GM12878 (cell line): ENCODE measurements at regions of chr5 and their contacts with region 1.

Region 1: GRCh38 chr5:35319333-35320002 is 89.2 kb upstream of the PRLR start:
- DNase-seq: peak; percentile 96
- ATAC-seq: peak; percentile 91
- H3K4me3 ChIP-seq: no peak overlapping the region
- H3K27ac ChIP-seq: peak overlapping the region; percentile 66
- H3K4me1 ChIP-seq: peaks cover 11% of the 10 kb centered on the region
- H3K27me3 ChIP-seq: no peaks in the 10 kb centered on the region
- CTCF ChIP-seq: no peak
- EP300 ChIP-seq: peak; percentile 92 to 96
- POLR2A ChIP-seq: no peak
- RAD21 ChIP-seq: no peak

Region 2: GRCh38 chr5:34838785-34839714 is 480.4 kb before region 1 on chr5 and contains the start of gene TTC23L:
- CTCF ChIA-PET with region 1: no interaction called
- POLR2A ChIA-PET with region 1: no interaction called
- RAD21 ChIA-PET with region 1: no interaction called
- SMC1A ChIA-PET with region 1: no interaction called
- in situ Hi-C with region 1: no loop called
- intact Hi-C with region 1: no loop called
- DNase-seq: peak; percentile 35
- ATAC-seq: peak; percentile 98
- H3K4me3 ChIP-seq: peak within 1 kb of the TSS; percentile 71
- H3K27ac ChIP-seq: no peak within 1 kb of the TSS
- H3K4me1 ChIP-seq: peaks cover 5% of the 10 kb centered on the region
- H3K27me3 ChIP-seq: no peaks in the 10 kb centered on the region
- CTCF ChIP-seq: no peak
- EP300 ChIP-seq: no peak
- POLR2A ChIP-seq: peak; percentile 83
- RAD21 ChIP-seq: no peak
- polyA plus RNA-seq, gene TTC23L: not detected

Region 3: DNA sequence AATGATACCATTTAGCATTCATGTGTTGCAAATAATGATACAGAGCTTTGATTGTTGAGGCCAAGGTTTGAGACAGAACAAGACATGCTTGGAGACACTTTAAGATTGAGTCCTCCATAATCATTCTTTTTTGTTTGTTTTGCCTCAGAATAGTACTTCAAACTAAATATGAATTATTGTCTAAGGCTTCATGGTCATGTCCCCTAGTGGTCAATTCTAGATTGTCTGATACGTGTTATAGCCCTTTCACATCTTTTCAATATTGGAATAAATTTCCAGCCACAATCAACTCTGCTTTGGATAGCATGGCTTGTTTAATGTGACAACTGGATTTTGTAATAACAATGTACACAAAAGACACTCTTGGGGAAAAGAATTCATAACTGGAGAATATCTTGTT is 153.4 kb before region 1 on chr5:
- CTCF ChIA-PET with region 1: no interaction called
- POLR2A ChIA-PET with region 1: no interaction called
- RAD21 ChIA-PET with region 1: no interaction called
- SMC1A ChIA-PET with region 1: no interaction called
- in situ Hi-C with region 1: no loop called
- intact Hi-C with region 1: no loop called
- DNase-seq: no peak
- ATAC-seq: no peak
- H3K4me3 ChIP-seq: no peak overlapping the region
- H3K27ac ChIP-seq: no peak overlapping the region
- H3K4me1 ChIP-seq: no peaks in the 10 kb centered on the region
- H3K27me3 ChIP-seq: no peaks in the 10 kb centered on the region
- CTCF ChIP-seq: no peak
- EP300 ChIP-seq: no peak
- POLR2A ChIP-seq: no peak
- RAD21 ChIP-seq: no peak

Region 4: GRCh38 chr5:35302544-35302943 is 16.9 kb before region 1 on chr5:
- CTCF ChIA-PET with region 1: interaction called, 6 read pairs
- POLR2A ChIA-PET with region 1: interaction called, 14 read pairs
- RAD21 ChIA-PET with region 1: interaction called, 23 read pairs
- SMC1A ChIA-PET with region 1: interaction called, 74 read pairs
- in situ Hi-C with region 1: no loop called
- intact Hi-C with region 1: loop called (anchors 1 kb)
- DNase-seq: peak; percentile 92
- ATAC-seq: peak; percentile 93
- H3K4me3 ChIP-seq: no peak overlapping the region
- H3K27ac ChIP-seq: peak overlapping the region; percentile 13; the same call in 1 of the 2 replicates
- H3K4me1 ChIP-seq: no peaks in the 10 kb centered on the region; the same call in 1 of the 2 replicates
- H3K27me3 ChIP-seq: no peaks in the 10 kb centered on the region
- CTCF ChIP-seq: no peak
- EP300 ChIP-seq: peak; percentile 66 to 69; a peak in 2 of 4 replicates
- POLR2A ChIP-seq: no peak
- RAD21 ChIP-seq: no peak

Region 5: GRCh38 chr5:35308421-35308820 is 11.0 kb before region 1 on chr5:
- CTCF ChIA-PET with region 1: interaction called, 5 read pairs
- POLR2A ChIA-PET with region 1: interaction called, 14 read pairs
- RAD21 ChIA-PET with region 1: interaction called, 23 read pairs
- SMC1A ChIA-PET with region 1: interaction called, 74 read pairs
- in situ Hi-C with region 1: no loop called
- intact Hi-C with region 1: no loop called
- DNase-seq: no peak
- ATAC-seq: peak; percentile 94
- H3K4me3 ChIP-seq: no peak overlapping the region
- H3K27ac ChIP-seq: no peak overlapping the region
- H3K4me1 ChIP-seq: no peaks in the 10 kb centered on the region
- H3K27me3 ChIP-seq: no peaks in the 10 kb centered on the region
- CTCF ChIP-seq: no peak
- EP300 ChIP-seq: no peak
- POLR2A ChIP-seq: no peak
- RAD21 ChIP-seq: no peak

Region 6: GRCh38 chr5:35337340-35338156 is 18.1 kb after region 1 on chr5:
- CTCF ChIA-PET with region 1: interaction called, 3 read pairs
- POLR2A ChIA-PET with region 1: interaction called, 3 read pairs
- RAD21 ChIA-PET with region 1: interaction called, 5 read pairs
- SMC1A ChIA-PET with region 1: interaction called, 45 read pairs
- in situ Hi-C with region 1: no loop called
- intact Hi-C with region 1: no loop called
- DNase-seq: no peak
- ATAC-seq: no peak
- H3K4me3 ChIP-seq: no peak overlapping the region
- H3K27ac ChIP-seq: no peak overlapping the region
- H3K4me1 ChIP-seq: no peaks in the 10 kb centered on the region
- H3K27me3 ChIP-seq: no peaks in the 10 kb centered on the region
- CTCF ChIP-seq: no peak
- EP300 ChIP-seq: no peak
- POLR2A ChIP-seq: no peak
- RAD21 ChIP-seq: no peak